ENCODE measurements at regions of chr6 and their contacts with region 1.

Region 1: DNA sequence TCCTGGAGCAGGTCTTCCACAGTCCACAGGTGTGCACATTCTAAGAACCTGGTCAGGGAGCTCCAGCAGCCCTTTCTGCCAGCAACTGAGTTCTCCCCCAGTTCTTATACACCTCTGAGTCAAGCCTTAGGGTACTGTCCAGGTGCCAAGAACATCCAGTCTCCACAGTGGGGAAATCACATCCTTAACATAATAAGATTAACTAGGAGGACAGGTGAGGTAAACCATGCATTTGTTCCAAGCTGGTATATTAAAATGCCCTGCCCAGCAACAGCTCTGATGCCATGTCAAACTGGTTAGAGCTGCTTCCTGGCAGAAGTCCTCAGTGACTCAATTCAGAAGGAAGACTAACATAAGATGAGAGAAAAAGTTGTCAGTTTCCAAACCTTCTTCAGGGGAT is 303.9 kb upstream of the SGK1 start:
- DNase-seq: no peak
- H3K4me3 Mint-ChIP-seq: no peak overlapping the region
- H3K27ac Mint-ChIP-seq: no peak overlapping the region
- H3K4me1 Mint-ChIP-seq: no peaks in the 10 kb centered on the region
- H3K27me3 Mint-ChIP-seq: peaks cover 8% of the 10 kb centered on the region

Region 2: GRCh38 chr6:134532694-134533624 is 88.9 kb before region 1 on chr6:
- CTCF ChIA-PET with region 1: no interaction called
- POLR2A ChIA-PET with region 1: interaction called, 11 read pairs
- DNase-seq: no peak
- H3K4me3 Mint-ChIP-seq: no peak overlapping the region
- H3K27ac Mint-ChIP-seq: no peak overlapping the region
- H3K4me1 Mint-ChIP-seq: peaks cover 29% of the 10 kb centered on the region
- H3K27me3 Mint-ChIP-seq: no peaks in the 10 kb centered on the region

Measured in activated CD4-positive, alpha-beta T cell treated with anti-CD3 and anti-CD28 coated beads, Interleukin-2, amount 10 ng/mL, durations not matched to agents 7 days and 5 days (primary cell).